HCT116 (cell line): ENCODE measurements at regions of chr3 and their contacts with region 1.

Region 1: DNA sequence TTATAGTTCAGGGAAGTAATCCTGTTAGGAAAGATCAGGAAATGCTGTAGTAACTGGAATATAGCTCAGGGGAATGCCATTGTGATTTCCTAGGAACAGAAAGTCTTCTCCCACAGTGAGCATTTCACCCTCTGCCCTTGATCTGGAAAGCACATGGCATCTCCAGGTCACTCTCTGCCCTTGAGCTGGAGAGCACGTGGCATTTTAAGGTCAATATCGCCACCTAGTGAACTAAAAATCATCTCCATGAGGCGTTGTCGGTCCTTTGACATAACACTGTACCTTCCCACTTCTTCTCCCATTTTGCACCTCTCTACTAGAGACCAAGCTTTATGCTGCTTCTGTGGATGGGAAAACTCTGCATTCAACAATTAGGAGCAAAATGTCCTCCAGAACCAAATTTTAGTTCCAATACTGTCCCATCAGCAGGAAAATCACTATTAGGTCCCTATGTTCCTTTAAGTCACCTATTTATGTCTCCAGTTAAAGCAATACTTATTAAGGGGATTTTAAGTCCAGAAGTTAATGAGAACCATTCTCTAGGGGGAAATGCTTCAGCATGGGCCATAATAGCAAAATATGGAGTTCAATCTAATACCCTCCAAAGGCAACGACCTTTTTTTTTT is 54.7 kb upstream of the GK5 start:
- DNase-seq: peak; percentile 71
- ATAC-seq: peak; percentile 97
- H3K4me3 ChIP-seq: no peak overlapping the region
- H3K27ac ChIP-seq: no peak overlapping the region
- H3K4me1 ChIP-seq: no peaks in the 10 kb centered on the region
- H3K27me3 ChIP-seq: no peaks in the 10 kb centered on the region
- CTCF ChIP-seq: peak; percentile 38 to 78 (median 72)
- POLR2A ChIP-seq: no peak
- RAD21 ChIP-seq: peak; percentile 92

Region 2: GRCh38 chr3:141460097-141460704 is 819.9 kb before region 1 on chr3:
- CTCF ChIA-PET with region 1: no interaction called
- POLR2A ChIA-PET with region 1: no interaction called
- RAD21 ChIA-PET with region 1: no interaction called
- intact Hi-C with region 1: loop called (anchors 10 kb)
- DNase-seq: peak; percentile 75
- ATAC-seq: peak; percentile 100
- H3K4me3 ChIP-seq: no peak overlapping the region
- H3K27ac ChIP-seq: no peak overlapping the region
- H3K4me1 ChIP-seq: peaks cover 0 to 5% of the 10 kb centered on the region in 2 experiments; a peak in 2 of 4 replicates
- H3K27me3 ChIP-seq: no peaks in the 10 kb centered on the region
- CTCF ChIP-seq: peak; percentile 88 to 90 (median 90)
- POLR2A ChIP-seq: no peak
- RAD21 ChIP-seq: peak; percentile 96

Region 3: DNA sequence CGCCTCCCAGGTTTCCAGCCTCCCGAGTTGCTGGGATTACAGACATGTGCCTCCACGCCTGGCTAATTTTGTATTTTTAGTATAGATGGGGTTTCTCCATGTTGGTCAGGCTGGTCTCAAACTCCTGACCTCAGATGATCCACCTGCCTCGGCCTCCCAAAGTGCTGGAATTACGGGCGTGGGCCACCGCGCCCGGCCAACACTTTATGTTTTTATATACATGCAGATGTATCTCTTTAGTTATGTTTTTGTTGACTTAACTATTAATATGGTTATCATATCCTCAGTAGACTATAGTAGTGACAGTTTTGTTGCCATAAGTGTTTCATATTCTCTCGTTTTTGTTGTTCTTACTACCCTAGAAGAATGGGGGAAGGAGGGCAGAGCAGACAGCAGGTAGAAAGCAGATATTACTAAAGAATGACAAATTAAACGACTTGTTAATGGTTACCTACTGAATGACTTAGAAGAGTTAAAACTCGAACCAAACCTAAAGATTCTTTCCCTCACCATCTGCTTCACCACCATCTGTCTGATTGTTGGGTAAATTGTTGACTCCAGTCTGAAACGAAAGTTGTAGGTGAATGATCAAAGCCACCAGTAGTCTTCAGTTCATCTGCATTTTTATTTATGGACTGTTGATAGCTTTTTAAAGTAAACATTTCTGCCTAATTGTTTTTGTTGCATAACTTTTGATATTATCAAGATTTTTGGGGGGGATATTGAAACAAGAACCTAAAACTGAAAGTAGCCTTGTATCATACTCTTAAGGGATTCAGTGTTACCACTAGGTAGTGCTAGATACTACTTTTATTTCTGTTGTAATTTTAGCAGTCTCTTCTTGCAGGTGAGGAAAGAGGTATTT is 704.0 kb before region 1 on chr3:
- CTCF ChIA-PET with region 1: no interaction called
- POLR2A ChIA-PET with region 1: no interaction called
- RAD21 ChIA-PET with region 1: no interaction called
- intact Hi-C with region 1: loop called (anchors 10 kb)
- DNase-seq: no peak
- ATAC-seq: peak; percentile 66
- H3K4me3 ChIP-seq: no peak overlapping the region
- H3K27ac ChIP-seq: no peak overlapping the region
- H3K4me1 ChIP-seq: no peaks in the 10 kb centered on the region
- H3K27me3 ChIP-seq: no peaks in the 10 kb centered on the region
- CTCF ChIP-seq: peak; percentile 25 to 56 (median 34); a peak in 3 of 6 replicates
- POLR2A ChIP-seq: no peak
- RAD21 ChIP-seq: peak; percentile 40; the same call in 1 of the 2 replicates

Region 4: DNA sequence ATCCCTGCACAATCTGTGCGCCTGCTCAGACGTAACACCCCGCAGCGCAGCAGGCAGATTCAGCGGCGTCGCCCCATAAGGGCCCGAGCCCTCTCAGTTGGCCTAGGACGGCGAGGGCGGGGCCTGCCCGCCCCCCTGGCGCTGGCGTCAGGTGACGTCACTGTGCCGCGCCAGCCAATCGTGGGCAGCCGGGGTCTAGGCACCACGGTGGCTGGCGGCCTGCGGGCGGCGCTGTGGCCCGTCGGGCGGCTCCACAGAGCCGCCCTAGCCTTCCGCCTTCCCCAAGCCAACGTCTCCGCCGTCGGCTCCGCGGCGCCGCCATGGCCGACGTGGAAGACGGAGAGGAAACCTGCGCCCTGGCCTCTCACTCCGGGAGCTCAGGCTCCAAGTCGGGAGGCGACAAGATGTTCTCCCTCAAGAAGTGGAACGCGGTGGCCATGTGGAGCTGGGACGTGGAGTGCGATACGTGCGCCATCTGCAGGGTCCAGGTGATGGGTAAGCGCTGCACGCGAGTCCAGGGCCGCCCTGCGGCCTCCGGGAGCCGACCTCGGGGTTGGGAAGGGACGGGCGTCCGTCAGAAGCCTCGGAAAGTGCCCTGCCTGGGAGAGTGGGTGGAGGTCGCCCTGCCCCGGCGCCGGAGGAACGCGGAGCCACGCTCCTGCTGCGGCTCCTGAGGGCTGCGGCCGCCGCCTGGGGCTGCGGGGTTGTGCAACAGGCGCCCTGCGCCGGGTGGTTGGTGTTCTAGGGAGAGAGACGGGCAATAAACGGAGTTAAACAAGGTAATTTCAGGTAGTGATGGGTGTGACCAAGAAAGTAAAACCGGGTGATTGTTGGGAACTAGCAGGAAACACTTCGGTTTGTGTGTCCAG is 541.8 kb before region 1 on chr3 and contains the start of gene RNF7:
- CTCF ChIA-PET with region 1: no interaction called
- POLR2A ChIA-PET with region 1: no interaction called
- RAD21 ChIA-PET with region 1: no interaction called
- intact Hi-C with region 1: loop called (anchors 1 kb)
- DNase-seq: peak; percentile 90
- ATAC-seq: peak; percentile 93
- H3K4me3 ChIP-seq: peak within 1 kb of the TSS; percentile 73 to 91
- H3K27ac ChIP-seq: peak within 1 kb of the TSS; percentile 84
- H3K4me1 ChIP-seq: peaks cover 9 to 11% of the 10 kb centered on the region in 2 experiments
- H3K27me3 ChIP-seq: no peaks in the 10 kb centered on the region
- CTCF ChIP-seq: peak; percentile 71 to 92 (median 89)
- POLR2A ChIP-seq: peak; percentile 82
- RAD21 ChIP-seq: peak; percentile 79
- total RNA-seq, gene RNF7: 82.3 TPM

Region 5: DNA sequence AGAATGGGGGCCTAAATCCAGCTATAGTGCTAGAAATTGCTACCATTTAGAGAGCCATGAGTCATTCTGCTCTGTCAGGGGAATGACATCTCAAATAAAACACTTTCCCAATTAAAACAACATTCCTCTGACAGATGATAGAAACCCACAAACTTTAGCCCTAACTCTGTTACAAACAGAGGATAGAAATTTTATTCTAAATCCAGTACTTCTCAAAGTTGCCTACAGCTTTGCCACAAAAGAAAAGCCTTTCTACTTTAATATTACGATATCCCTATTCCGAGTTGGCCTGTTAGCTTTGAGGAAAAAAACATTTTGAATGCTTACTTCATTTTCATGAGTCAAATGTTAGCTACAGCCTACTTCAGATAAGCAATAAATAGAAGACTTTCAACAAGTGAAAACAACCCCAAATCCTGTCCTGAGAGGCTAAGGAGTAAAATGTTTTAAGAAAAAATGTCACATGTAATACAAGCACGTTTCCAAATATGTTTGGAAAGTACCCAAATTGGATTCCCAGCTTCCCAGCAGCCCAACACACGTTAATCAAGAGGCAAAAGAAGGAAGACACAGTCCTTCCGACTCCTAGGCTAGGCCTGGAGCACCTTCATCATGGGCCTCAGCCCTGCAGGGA is 320.0 kb before region 1 on chr3:
- CTCF ChIA-PET with region 1: no interaction called
- POLR2A ChIA-PET with region 1: no interaction called
- RAD21 ChIA-PET with region 1: no interaction called
- intact Hi-C with region 1: loop called (anchors 1 kb)
- DNase-seq: peak; percentile 12
- ATAC-seq: peak; percentile 63; the same call in 1 of the 2 replicates
- H3K4me3 ChIP-seq: no peak overlapping the region
- H3K27ac ChIP-seq: peak overlapping the region; percentile 52; the same call in 1 of the 2 replicates
- H3K4me1 ChIP-seq: peaks cover 17 to 18% of the 10 kb centered on the region in 2 experiments
- H3K27me3 ChIP-seq: no peaks in the 10 kb centered on the region
- CTCF ChIP-seq: no peak
- POLR2A ChIP-seq: no peak
- RAD21 ChIP-seq: no peak

Region 6: DNA sequence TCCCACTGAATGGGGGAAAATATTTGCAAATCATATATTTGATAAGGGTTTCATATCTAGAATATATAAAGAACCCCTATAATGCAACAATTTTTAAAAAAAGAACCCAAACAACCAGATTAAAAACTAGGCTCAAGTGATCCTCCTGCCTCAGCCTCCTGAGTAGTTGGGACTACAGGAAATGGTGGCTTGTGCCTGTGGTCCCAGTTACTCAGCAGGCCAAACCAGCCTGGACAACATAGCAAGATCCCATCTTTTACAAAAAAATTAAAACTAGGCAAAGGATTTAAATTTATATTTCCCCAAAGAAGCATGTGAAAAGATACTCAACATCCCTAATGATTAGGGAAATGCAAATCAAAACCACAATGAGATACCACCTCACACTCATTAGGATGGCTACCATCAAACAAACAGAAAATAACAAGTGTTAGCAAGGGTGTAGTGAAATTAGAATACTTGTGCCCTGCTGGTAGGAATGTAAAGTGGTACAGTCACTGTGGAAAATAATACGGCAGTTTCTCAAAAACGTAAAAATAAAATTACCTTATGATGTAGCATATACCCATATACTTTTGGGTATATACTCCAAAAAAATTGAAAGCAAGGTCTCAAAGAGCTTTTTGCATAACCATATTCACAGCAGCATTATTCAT is 150.4 kb before region 1 on chr3:
- CTCF ChIA-PET with region 1: interaction called, 14 read pairs
- POLR2A ChIA-PET with region 1: interaction called, 3 read pairs
- RAD21 ChIA-PET with region 1: interaction called, 3 to 7 read pairs
- intact Hi-C with region 1: loop called (anchors 1 kb)
- DNase-seq: no peak
- ATAC-seq: no peak
- H3K4me3 ChIP-seq: no peak overlapping the region
- H3K27ac ChIP-seq: no peak overlapping the region
- H3K4me1 ChIP-seq: no peaks in the 10 kb centered on the region
- H3K27me3 ChIP-seq: no peaks in the 10 kb centered on the region
- CTCF ChIP-seq: peak in 2 of 3 experiments; percentile 23 to 54; a peak in 3 of 6 replicates
- POLR2A ChIP-seq: no peak
- RAD21 ChIP-seq: no peak

Region 7: DNA sequence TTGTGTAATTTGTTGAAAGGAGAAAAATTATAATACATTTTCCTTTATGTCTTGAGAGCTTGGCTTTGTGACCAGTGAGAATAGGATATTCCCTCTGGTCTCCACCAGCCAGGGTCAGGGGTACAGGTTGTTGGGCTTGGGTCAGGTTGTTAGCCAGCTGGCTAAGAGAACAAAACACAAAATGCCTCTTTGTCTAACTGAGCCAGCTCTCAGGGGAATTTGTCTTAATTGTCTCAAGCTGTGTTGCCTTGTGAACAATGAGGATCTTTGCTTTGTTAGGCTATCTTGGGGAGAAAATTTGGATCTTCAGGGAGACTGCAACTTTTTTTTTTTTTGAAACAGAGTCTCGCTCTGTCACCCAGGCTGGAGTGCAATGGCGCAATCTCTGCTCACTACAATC is 36.9 kb before region 1 on chr3:
- CTCF ChIA-PET with region 1: no interaction called
- POLR2A ChIA-PET with region 1: no interaction called
- RAD21 ChIA-PET with region 1: no interaction called
- intact Hi-C with region 1: no loop called
- DNase-seq: no peak
- ATAC-seq: no peak
- H3K4me3 ChIP-seq: no peak overlapping the region
- H3K27ac ChIP-seq: no peak overlapping the region
- H3K4me1 ChIP-seq: no peaks in the 10 kb centered on the region
- H3K27me3 ChIP-seq: no peaks in the 10 kb centered on the region
- CTCF ChIP-seq: no peak
- POLR2A ChIP-seq: no peak
- RAD21 ChIP-seq: no peak